HEK293 (cell line): ENCODE measurements at regions of chr12 and their contacts with region 1.

Region 1: GRCh38 chr12:43434614-43435013 is 117.4 kb downstream of the ADAMTS20 start:
- H3K4me3 ChIP-seq: no peak overlapping the region
- H3K27ac ChIP-seq: no peak overlapping the region
- H3K4me1 ChIP-seq: no peaks in the 10 kb centered on the region
- CTCF ChIP-seq: no peak

Region 2: DNA sequence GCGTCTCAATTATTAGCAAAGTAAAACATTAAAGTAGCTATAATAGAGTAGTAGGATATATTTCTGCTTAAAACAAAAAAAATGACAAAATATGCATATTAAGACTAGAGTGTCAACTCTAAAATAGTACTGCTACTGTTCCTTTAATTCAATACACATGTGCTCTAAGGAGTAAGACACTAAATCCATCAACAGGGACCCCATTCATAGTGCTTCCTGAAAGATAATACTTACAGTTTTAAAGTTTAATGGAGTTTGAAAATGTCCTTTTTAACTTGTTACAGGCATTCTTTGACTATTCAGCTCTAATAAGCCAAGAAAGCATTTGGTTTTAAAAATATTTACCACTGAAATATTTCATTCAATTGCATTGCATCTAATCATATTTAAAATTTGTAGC is 27.8 kb before region 1 on chr12:
- CTCF ChIA-PET with region 1: no interaction called
- POLR2A ChIA-PET with region 1: no interaction called
- H3K4me3 ChIP-seq: no peak overlapping the region
- H3K27ac ChIP-seq: no peak overlapping the region
- H3K4me1 ChIP-seq: no peaks in the 10 kb centered on the region
- CTCF ChIP-seq: no peak

Region 3: DNA sequence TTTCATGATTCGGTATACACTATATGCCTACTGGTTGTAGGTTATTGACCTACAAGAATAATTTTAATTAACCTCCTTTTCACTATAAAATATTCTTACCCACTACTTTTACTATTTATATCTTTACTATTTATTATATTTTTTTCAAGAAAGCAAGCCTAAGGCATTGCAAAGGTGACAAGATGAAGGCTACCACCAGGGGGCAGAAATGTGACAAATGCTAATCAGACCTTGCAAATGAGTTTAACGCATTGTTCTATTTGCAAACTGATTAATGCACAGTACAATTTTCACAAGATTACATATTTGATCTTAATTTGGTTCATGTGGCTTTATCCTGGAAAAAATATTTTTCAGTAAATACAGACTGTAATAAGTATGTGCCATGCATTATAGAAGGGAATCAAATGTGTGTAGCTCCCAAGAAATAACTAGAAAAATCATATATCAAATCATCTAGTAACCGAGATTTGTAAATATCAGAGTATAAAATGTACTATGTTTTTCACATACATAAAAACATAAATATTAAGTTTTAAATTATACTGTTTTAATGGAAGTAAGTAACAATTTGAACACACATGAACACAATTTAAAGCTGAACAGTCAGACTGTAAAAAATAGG is 10.4 kb after region 1 on chr12:
- CTCF ChIA-PET with region 1: interaction called, 15 read pairs
- POLR2A ChIA-PET with region 1: no interaction called
- H3K4me3 ChIP-seq: no peak overlapping the region
- H3K27ac ChIP-seq: no peak overlapping the region
- H3K4me1 ChIP-seq: no peaks in the 10 kb centered on the region
- CTCF ChIP-seq: no peak

Region 4: GRCh38 chr12:43550831-43551271 is 116.2 kb after region 1 on chr12:
- CTCF ChIA-PET with region 1: no interaction called
- POLR2A ChIA-PET with region 1: no interaction called
- H3K4me3 ChIP-seq: no peak overlapping the region
- H3K27ac ChIP-seq: no peak overlapping the region
- H3K4me1 ChIP-seq: no peaks in the 10 kb centered on the region
- CTCF ChIP-seq: no peak